ENCODE measurements at regions of chr2 and their contacts with region 1.

Region 1: GRCh38 chr2:27441958-27442919 is at the start of gene KRTCAP3:
- DNase-seq: peak; percentile 89 to 95
- H3K4me3 ChIP-seq: peak within 1 kb of the TSS; percentile 90
- H3K4me3 Mint-ChIP-seq: peak within 1 kb of the TSS; percentile 72
- H3K27ac Mint-ChIP-seq: peak within 1 kb of the TSS; percentile 48
- H3K4me1 ChIP-seq: no peaks in the 10 kb centered on the region
- H3K4me1 Mint-ChIP-seq: peaks cover 13% of the 10 kb centered on the region
- H3K27me3 ChIP-seq: no peaks in the 10 kb centered on the region
- H3K27me3 Mint-ChIP-seq: no peaks in the 10 kb centered on the region
- CTCF ChIP-seq: peak; percentile 79 to 89
- total RNA-seq, gene KRTCAP3: 47.8 and 53.9 TPM in 2 replicates

Region 2: GRCh38 chr2:27249891-27250651 is 192.2 kb before region 1 on chr2:
- CTCF ChIA-PET with region 1: no interaction called
- POLR2A ChIA-PET with region 1: no interaction called
- intact Hi-C with region 1: no loop called
- DNase-seq: peak in 1 of 2 experiments; percentile 73
- H3K4me3 ChIP-seq: no peak overlapping the region
- H3K4me3 Mint-ChIP-seq: no peak overlapping the region
- H3K27ac Mint-ChIP-seq: no peak overlapping the region
- H3K4me1 ChIP-seq: no peaks in the 10 kb centered on the region
- H3K4me1 Mint-ChIP-seq: no peaks in the 10 kb centered on the region
- H3K27me3 ChIP-seq: no peaks in the 10 kb centered on the region
- H3K27me3 Mint-ChIP-seq: no peaks in the 10 kb centered on the region
- CTCF ChIP-seq: peak; percentile 47 to 78

Region 3: GRCh38 chr2:27409321-27410073 is 32.7 kb before region 1 on chr2 and contains the start of gene PPM1G:
- CTCF ChIA-PET with region 1: interaction called, 4 read pairs
- POLR2A ChIA-PET with region 1: no interaction called
- intact Hi-C with region 1: loop called (anchors 1 kb)
- DNase-seq: peak; percentile 96 to 99
- H3K4me3 ChIP-seq: peak within 1 kb of the TSS; percentile 68
- H3K4me3 Mint-ChIP-seq: peak within 1 kb of the TSS; percentile 84
- H3K27ac Mint-ChIP-seq: peak within 1 kb of the TSS; percentile 91
- H3K4me1 ChIP-seq: peaks cover 28% of the 10 kb centered on the region
- H3K4me1 Mint-ChIP-seq: peaks cover 33% of the 10 kb centered on the region
- H3K27me3 ChIP-seq: no peaks in the 10 kb centered on the region
- H3K27me3 Mint-ChIP-seq: no peaks in the 10 kb centered on the region
- CTCF ChIP-seq: no peak
- total RNA-seq, gene PPM1G: 140 and 149 TPM in 2 replicates

Region 4: DNA sequence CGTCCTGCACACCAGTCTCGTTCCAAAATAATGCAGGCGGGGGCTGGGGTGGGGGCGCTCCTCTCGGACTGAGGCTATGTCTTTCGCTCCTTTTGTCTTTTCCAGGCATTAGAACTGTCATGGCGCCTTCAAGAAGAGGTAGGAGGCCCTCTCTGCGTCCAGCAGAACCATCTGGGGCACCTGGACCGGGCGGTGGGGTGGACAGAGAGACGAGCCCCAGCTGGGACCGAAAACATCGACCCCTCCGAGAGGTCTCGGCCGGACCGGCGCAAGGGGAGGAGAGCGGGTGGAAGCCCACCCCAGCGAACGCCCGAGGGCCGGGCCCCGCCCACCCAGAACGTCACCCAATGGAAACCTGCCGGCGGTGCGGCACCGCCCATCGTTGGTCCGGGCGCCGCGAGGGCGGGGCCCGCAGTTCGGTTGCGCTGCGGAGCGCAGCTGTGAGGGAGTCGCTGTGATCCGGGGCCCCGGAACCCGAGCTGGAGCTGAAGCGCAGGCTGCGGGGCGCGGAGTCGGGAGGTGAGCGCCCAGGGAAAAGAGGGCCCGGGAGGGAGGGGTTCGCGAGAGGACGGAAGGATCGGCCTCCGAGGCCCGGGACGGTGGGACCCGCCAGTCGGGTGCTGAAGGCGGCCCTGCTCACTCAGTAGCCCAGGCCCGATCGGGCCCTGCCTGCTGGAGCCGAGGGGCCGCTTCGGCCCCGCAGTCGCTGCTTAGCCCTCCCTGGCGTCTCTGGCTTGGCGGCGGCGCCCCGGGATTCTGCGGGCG is 13.8 kb before region 1 on chr2 and contains the start of gene NRBP1:
- CTCF ChIA-PET with region 1: interaction called, 4 read pairs
- POLR2A ChIA-PET with region 1: interaction called, 9 read pairs
- intact Hi-C with region 1: loop called (anchors 1 kb)
- DNase-seq: peak; percentile 96 to 98
- H3K4me3 ChIP-seq: peak within 1 kb of the TSS; percentile 92
- H3K4me3 Mint-ChIP-seq: peak within 1 kb of the TSS; percentile 89
- H3K27ac Mint-ChIP-seq: peak within 1 kb of the TSS; percentile 94
- H3K4me1 ChIP-seq: peaks cover 19% of the 10 kb centered on the region
- H3K4me1 Mint-ChIP-seq: peaks cover 6% of the 10 kb centered on the region
- H3K27me3 ChIP-seq: no peaks in the 10 kb centered on the region
- H3K27me3 Mint-ChIP-seq: no peaks in the 10 kb centered on the region
- CTCF ChIP-seq: peak in 1 of 2 experiments; percentile 0
- total RNA-seq, gene NRBP1: 148 and 169 TPM in 2 replicates

Region 5: DNA sequence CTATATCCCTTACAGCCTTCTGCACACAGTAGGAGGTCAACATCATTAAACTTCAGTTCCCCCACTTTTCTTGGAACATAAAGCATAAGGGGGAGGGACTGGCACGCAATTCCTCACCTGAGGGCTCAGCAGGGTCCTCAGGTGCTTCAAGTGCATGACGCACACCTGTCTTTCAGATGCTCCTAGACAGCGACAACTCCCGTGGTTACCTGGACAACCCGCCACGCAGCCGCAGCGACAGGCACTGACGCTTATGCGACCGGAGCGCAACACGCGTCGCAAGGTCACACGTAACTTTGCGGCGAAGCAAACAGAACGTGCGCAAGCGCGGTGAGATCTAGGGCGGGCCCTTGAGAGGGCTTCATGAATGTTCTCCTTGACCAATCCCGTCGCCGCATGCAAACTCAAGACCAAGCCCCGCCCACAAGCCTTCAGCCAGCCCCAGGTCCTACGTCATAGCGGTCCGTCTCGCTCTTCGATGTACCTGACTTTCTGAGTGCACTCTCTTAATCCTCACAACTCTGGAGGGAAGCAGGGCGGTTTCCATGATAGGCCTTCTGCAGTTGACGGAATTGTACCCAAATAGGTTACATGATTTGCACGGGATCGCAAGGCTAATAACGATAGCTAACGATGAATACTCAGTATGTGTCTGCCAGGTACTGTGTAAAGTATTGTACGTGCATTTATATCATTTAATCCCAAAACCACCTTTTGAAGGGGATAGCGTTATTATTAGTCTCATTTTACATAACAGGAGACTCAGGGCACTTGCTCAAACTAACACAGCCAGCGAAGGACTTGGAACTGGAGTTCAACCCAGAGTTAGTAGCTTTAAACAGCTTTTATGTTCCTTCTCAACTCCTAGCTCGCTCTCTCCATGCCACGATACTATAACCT is 47.5 kb after region 1 on chr2 and contains the start of gene IFT172:
- CTCF ChIA-PET with region 1: no interaction called
- POLR2A ChIA-PET with region 1: no interaction called
- intact Hi-C with region 1: loop called (anchors 2 kb)
- DNase-seq: peak; percentile 99 to 100
- H3K4me3 ChIP-seq: peak within 1 kb of the TSS; percentile 46
- H3K4me3 Mint-ChIP-seq: peak within 1 kb of the TSS; percentile 85
- H3K27ac Mint-ChIP-seq: peak within 1 kb of the TSS; percentile 92
- H3K4me1 ChIP-seq: peaks cover 9% of the 10 kb centered on the region; the same call in 1 of the 2 replicates
- H3K4me1 Mint-ChIP-seq: peaks cover 6% of the 10 kb centered on the region
- H3K27me3 ChIP-seq: no peaks in the 10 kb centered on the region
- H3K27me3 Mint-ChIP-seq: peaks cover 2% of the 10 kb centered on the region
- CTCF ChIP-seq: no peak
- total RNA-seq, gene IFT172: 17.2 and 21.9 TPM in 2 replicates

Region 6: GRCh38 chr2:27582695-27583389 is 140.6 kb after region 1 on chr2 and contains the start of gene ZNF512:
- CTCF ChIA-PET with region 1: no interaction called
- POLR2A ChIA-PET with region 1: interaction called, 6 read pairs
- intact Hi-C with region 1: loop called (anchors 1 kb)
- DNase-seq: peak; percentile 95 to 97
- H3K4me3 ChIP-seq: peak within 1 kb of the TSS; percentile 47
- H3K4me3 Mint-ChIP-seq: peak within 1 kb of the TSS; percentile 99
- H3K27ac Mint-ChIP-seq: peak within 1 kb of the TSS; percentile 97
- H3K4me1 ChIP-seq: peaks cover 8% of the 10 kb centered on the region
- H3K4me1 Mint-ChIP-seq: peaks cover 16% of the 10 kb centered on the region
- H3K27me3 ChIP-seq: no peaks in the 10 kb centered on the region
- H3K27me3 Mint-ChIP-seq: peaks cover 5% of the 10 kb centered on the region
- CTCF ChIP-seq: no peak
- total RNA-seq, gene ZNF512: 33.9 and 38.9 TPM in 2 replicates

Region 7: DNA sequence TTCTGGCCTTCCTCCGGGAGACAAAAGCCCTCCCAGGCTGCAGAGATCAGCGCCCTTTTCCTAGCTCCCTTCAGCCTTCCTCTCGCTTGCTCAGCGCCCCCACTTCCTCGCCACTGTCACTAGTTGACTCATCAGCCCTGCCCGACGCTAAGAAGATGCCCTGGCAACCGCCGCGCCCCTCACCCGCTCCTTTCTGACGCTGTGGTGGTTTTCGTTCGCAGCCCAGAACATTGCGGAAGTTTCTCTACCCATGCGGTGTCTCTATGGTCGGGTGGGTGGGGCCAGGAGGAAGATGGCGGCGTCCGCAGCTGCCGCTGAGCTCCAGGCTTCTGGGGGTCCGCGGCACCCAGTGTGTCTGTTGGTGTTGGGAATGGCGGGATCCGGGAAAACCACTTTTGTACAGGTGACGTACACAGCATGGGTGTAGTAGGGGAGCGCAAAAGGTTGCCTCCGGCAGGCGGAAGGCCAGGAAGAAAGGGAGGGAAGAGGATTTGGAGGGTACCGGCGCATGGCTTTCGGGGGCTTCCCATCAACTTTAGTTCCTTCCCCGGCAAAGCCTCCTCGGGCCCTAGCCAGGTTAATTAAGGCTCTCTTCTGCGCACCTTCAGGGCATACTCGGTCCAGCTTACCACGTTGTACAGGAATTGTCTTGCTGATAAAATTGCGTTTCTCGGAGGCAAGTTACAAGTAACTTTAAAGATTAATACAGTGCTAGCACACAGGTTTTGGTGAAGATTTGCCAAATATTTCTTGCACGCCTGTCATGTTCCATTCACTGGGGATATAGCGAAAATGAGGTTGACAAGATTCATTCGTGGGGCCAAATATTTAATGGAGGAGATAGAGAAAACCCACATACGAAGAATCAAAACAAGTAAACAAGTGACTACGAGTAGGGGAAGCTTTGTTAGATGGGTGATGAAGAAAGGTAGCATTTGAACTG is 186.8 kb after region 1 on chr2 and contains the starts of genes CCDC121 and GPN1:
- CTCF ChIA-PET with region 1: interaction called, 3 read pairs
- POLR2A ChIA-PET with region 1: no interaction called
- intact Hi-C with region 1: loop called (anchors 2 kb)
- DNase-seq: peak; percentile 85 to 88
- H3K4me3 ChIP-seq: peak within 1 kb of the TSS; percentile 71
- H3K4me3 Mint-ChIP-seq: no peak within 1 kb of the TSS
- H3K27ac Mint-ChIP-seq: no peak within 1 kb of the TSS
- H3K4me1 ChIP-seq: peaks cover 10% of the 10 kb centered on the region; the same call in 1 of the 2 replicates
- H3K4me1 Mint-ChIP-seq: peaks cover 14% of the 10 kb centered on the region
- H3K27me3 ChIP-seq: no peaks in the 10 kb centered on the region
- H3K27me3 Mint-ChIP-seq: no peaks in the 10 kb centered on the region
- CTCF ChIP-seq: no peak
- total RNA-seq, gene CCDC121: 3.9 and 4.7 TPM in 2 replicates
- total RNA-seq, gene GPN1: 45.9 and 60.9 TPM in 2 replicates